ENCODE measurements at regions of chr14 and their contacts with region 1.

Region 1: GRCh38 chr14:63543000-63543825 is at the start of gene PPP2R5E:
- DNase-seq: peak; percentile 99
- H3K4me3 Mint-ChIP-seq: peak within 1 kb of the TSS; percentile 86
- H3K27ac Mint-ChIP-seq: peak within 1 kb of the TSS; percentile 84
- H3K4me1 Mint-ChIP-seq: peaks cover 33% of the 10 kb centered on the region
- H3K27me3 Mint-ChIP-seq: no peaks in the 10 kb centered on the region
- total RNA-seq, gene PPP2R5E: 44.8 to 46.3 TPM

Region 2: DNA sequence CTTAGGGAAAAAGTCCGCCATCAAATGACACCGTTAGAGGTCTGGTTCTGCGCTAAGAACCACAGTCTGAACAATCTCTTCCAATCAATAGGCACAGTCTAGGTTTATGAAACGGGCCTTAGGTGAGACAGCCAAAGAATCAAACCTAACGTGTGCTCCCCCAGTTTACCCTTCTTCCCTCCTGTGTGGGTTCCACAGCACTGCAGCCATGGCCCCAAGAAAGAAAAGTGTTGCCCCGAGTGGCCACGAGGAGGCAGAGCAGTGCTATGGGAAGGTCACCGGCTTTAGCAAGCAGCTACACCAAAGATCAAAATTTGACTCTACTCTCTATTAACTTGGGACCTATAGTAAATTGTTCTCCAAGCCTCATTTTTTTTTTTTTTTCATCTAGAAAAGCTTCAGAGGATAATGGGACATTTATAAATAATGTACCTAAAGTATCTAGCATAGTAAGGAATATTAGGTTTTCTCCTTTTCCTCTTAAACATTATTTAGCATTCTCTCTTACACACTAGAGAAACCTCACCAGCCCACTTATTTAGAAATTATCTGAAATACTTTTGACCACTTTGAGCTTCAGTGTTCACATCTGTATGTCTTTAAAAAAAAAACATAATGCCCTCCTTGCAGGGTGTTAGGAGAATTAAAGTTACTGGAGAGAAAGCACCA is 154.3 kb before region 1 on chr14:
- CTCF ChIA-PET with region 1: interaction called, 31 read pairs
- POLR2A ChIA-PET with region 1: no interaction called
- DNase-seq: peak; percentile 72
- H3K4me3 Mint-ChIP-seq: no peak overlapping the region
- H3K27ac Mint-ChIP-seq: no peak overlapping the region
- H3K4me1 Mint-ChIP-seq: peaks cover 13% of the 10 kb centered on the region
- H3K27me3 Mint-ChIP-seq: no peaks in the 10 kb centered on the region

Region 3: GRCh38 chr14:63437953-63438757 is 105.1 kb before region 1 on chr14:
- CTCF ChIA-PET with region 1: interaction called, 5 read pairs
- POLR2A ChIA-PET with region 1: interaction called, 12 read pairs
- DNase-seq: peak; percentile 46
- H3K4me3 Mint-ChIP-seq: peak overlapping the region; percentile 53
- H3K27ac Mint-ChIP-seq: peak overlapping the region; percentile 57
- H3K4me1 Mint-ChIP-seq: peaks cover 52% of the 10 kb centered on the region
- H3K27me3 Mint-ChIP-seq: no peaks in the 10 kb centered on the region

Region 4: GRCh38 chr14:63478010-63478409 is 65.2 kb before region 1 on chr14:
- CTCF ChIA-PET with region 1: interaction called, 3 read pairs
- POLR2A ChIA-PET with region 1: interaction called, 21 read pairs
- DNase-seq: peak; percentile 50
- H3K4me3 Mint-ChIP-seq: peak overlapping the region; percentile 7
- H3K27ac Mint-ChIP-seq: peak overlapping the region; percentile 66
- H3K4me1 Mint-ChIP-seq: peaks cover 40% of the 10 kb centered on the region
- H3K27me3 Mint-ChIP-seq: no peaks in the 10 kb centered on the region

Region 5: DNA sequence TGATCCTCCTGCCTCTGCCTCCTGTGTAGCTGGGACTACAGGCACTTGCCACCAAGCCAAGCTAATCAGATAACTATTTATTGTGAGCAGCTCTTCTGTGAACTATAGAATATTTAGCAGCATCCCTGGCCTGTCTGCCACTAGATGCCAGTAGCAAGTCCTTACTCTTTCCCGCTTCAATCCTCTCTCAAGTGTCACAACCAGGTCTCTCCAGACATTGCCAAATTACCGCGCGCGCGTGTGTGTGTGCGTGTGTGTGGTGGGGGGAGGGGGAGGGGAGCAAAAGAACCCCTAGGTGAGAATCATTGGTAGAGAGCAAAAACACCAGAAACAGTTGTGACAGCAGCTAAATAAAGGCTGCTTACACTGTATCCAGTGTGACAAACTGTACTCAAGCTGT is 50.0 kb before region 1 on chr14:
- CTCF ChIA-PET with region 1: no interaction called
- POLR2A ChIA-PET with region 1: no interaction called
- DNase-seq: no peak
- H3K4me3 Mint-ChIP-seq: no peak overlapping the region
- H3K27ac Mint-ChIP-seq: no peak overlapping the region
- H3K4me1 Mint-ChIP-seq: peaks cover 3% of the 10 kb centered on the region
- H3K27me3 Mint-ChIP-seq: no peaks in the 10 kb centered on the region

Region 6: DNA sequence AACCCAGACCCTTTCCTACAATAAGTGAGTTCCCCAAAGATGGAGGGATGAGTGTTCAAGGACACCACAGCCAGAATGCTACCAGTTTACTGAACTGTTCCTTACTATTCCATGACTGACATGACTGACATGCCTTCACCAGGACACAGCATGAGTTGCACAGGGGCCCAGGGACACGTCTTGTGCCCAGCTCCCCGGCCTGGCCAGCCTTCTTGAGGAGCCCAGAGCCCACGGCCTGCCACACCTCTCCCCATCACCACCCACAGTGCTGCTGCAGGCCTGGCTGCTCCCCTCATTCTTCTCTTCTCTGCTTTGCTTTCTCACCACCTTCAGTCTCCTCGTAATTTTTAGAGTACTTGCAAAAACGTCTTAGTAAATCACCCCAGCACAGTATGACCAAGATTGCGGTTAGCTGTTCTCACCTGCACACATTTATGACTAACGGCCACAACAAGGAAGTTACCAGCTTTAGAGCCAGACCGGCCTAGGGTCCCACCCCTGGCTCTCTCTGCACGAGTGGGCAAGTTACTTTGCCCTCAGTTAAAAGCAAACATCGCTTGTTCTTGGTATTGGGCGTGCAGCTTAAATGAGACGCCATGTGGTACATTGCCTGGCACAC is 18.6 kb before region 1 on chr14:
- CTCF ChIA-PET with region 1: no interaction called
- POLR2A ChIA-PET with region 1: interaction called, 10 read pairs
- DNase-seq: peak; percentile 17
- H3K4me3 Mint-ChIP-seq: no peak overlapping the region
- H3K27ac Mint-ChIP-seq: peak overlapping the region; percentile 4
- H3K4me1 Mint-ChIP-seq: peaks cover 17% of the 10 kb centered on the region
- H3K27me3 Mint-ChIP-seq: no peaks in the 10 kb centered on the region

Region 7: GRCh38 chr14:63641473-63642228 is 98.4 kb after region 1 on chr14 and contains the start of gene WDR89:
- CTCF ChIA-PET with region 1: interaction called, 4 read pairs
- POLR2A ChIA-PET with region 1: interaction called, 24 read pairs
- DNase-seq: peak; percentile 98
- H3K4me3 Mint-ChIP-seq: peak within 1 kb of the TSS; percentile 80
- H3K27ac Mint-ChIP-seq: peak within 1 kb of the TSS; percentile 89
- H3K4me1 Mint-ChIP-seq: peaks cover 38% of the 10 kb centered on the region
- H3K27me3 Mint-ChIP-seq: no peaks in the 10 kb centered on the region
- total RNA-seq, gene WDR89: 20.1 to 21.9 TPM